Activated CD4-positive, alpha-beta T cell treated with anti-CD3 and anti-CD28 coated beads for 36 hours (primary cell): ENCODE measurements at regions of chr2 and their contacts with region 1.

Region 1: DNA sequence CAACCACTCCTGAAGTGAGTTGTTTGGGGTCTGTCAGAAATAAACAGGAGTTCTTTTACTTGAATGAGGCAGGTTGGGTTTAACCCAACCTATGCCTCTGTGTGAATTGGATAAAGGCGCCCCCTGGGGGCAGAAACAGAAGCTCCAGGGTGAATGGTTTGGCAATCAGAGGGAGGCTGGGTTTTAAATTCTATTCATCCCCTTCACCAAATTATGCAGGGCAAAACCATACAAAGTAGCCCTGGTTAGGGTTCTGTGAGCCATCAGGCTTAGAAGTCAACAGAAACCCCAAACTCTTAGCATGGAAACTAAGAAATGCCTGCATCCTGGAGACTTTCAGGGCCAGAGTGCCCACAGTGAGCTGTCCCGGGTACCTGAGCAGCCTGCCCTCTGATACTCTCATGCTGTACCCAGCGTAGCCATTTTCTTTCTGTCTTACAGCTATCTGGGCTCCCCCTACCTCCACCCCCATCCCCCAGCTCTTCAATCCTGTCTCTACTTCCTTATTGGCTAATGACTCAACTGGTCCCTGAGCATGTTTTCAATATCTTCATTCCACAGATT is 241.5 kb downstream of the ICOS start:
- DNase-seq: peak; percentile 85
- ATAC-seq: peak; percentile 95
- H3K4me3 Mint-ChIP-seq: no peak overlapping the region
- H3K27ac Mint-ChIP-seq: no peak overlapping the region
- H3K4me1 Mint-ChIP-seq: peaks cover 8% of the 10 kb centered on the region
- H3K27me3 Mint-ChIP-seq: peaks cover 7% of the 10 kb centered on the region

Region 2: GRCh38 chr2:203928849-203929248 is 249.2 kb before region 1 on chr2:
- CTCF ChIA-PET with region 1: interaction called, 5 read pairs
- POLR2A ChIA-PET with region 1: no interaction called
- intact Hi-C with region 1: loop called in 1 of 2 experiments (anchors 1 kb)
- DNase-seq: no peak
- ATAC-seq: no peak
- H3K4me3 Mint-ChIP-seq: no peak overlapping the region
- H3K27ac Mint-ChIP-seq: no peak overlapping the region
- H3K4me1 Mint-ChIP-seq: peaks cover 41% of the 10 kb centered on the region
- H3K27me3 Mint-ChIP-seq: peaks cover 1% of the 10 kb centered on the region

Region 3: DNA sequence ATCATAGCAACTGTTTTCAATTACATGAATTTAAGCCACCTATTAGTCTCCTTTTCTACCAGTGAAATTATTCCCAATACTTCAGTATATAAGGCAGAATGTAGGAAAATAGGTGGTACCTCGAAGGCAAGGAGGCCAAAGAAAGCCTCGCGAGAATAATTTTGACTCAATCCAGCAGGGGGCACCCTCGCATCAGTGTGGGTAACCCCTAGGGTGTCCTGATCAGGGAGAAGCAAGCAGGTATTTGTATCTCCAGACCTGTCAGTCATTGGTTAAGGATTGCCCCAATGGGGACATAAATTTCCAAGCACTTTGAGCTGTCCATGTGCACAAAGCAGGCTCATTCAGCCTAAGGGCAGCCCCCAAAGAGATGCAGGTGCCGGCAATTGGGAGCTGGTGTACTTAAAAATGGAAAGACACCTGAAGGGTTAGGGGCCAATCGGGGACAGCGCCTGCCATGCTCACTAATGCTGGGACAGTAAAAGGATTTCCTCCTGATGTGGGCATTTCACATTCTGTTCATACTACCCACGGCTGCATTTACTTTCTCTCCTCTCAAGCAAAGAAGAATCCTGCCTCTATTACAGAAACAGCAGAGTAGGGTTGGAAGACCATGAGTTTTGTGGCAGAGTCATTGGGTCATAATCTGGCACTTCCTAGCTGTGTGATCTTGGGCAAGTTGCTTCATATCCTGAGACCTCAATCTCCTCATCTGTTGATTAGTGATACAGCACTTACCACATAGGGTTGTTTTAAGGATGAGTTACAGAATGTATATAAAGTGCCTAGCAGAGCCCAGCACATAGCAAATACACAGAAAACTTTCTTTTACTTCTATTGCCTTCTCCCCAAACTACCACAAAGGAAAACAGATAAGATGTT is 105.4 kb before region 1 on chr2:
- CTCF ChIA-PET with region 1: interaction called, 137 read pairs
- POLR2A ChIA-PET with region 1: no interaction called
- intact Hi-C with region 1: loop called (anchors 1 kb)
- DNase-seq: peak; percentile 88
- ATAC-seq: peak; percentile 89
- H3K4me3 Mint-ChIP-seq: no peak overlapping the region
- H3K27ac Mint-ChIP-seq: no peak overlapping the region
- H3K4me1 Mint-ChIP-seq: peaks cover 7% of the 10 kb centered on the region
- H3K27me3 Mint-ChIP-seq: peaks cover 5% of the 10 kb centered on the region

Region 4: GRCh38 chr2:204145263-204145751 is 32.8 kb before region 1 on chr2:
- CTCF ChIA-PET with region 1: interaction called, 37 read pairs
- POLR2A ChIA-PET with region 1: no interaction called
- intact Hi-C with region 1: loop called (anchors 1 to 2 kb)
- DNase-seq: peak; percentile 89
- ATAC-seq: peak; percentile 97
- H3K4me3 Mint-ChIP-seq: peak overlapping the region; percentile 65
- H3K27ac Mint-ChIP-seq: peak overlapping the region; percentile 68
- H3K4me1 Mint-ChIP-seq: peaks cover 10% of the 10 kb centered on the region
- H3K27me3 Mint-ChIP-seq: peaks cover 13% of the 10 kb centered on the region

Region 5: GRCh38 chr2:204161009-204161408 is 17.1 kb before region 1 on chr2:
- CTCF ChIA-PET with region 1: interaction called, 26 read pairs
- POLR2A ChIA-PET with region 1: no interaction called
- intact Hi-C with region 1: no loop called
- DNase-seq: no peak
- ATAC-seq: no peak
- H3K4me3 Mint-ChIP-seq: no peak overlapping the region
- H3K27ac Mint-ChIP-seq: no peak overlapping the region
- H3K4me1 Mint-ChIP-seq: no peaks in the 10 kb centered on the region
- H3K27me3 Mint-ChIP-seq: peaks cover 9% of the 10 kb centered on the region

Region 6: DNA sequence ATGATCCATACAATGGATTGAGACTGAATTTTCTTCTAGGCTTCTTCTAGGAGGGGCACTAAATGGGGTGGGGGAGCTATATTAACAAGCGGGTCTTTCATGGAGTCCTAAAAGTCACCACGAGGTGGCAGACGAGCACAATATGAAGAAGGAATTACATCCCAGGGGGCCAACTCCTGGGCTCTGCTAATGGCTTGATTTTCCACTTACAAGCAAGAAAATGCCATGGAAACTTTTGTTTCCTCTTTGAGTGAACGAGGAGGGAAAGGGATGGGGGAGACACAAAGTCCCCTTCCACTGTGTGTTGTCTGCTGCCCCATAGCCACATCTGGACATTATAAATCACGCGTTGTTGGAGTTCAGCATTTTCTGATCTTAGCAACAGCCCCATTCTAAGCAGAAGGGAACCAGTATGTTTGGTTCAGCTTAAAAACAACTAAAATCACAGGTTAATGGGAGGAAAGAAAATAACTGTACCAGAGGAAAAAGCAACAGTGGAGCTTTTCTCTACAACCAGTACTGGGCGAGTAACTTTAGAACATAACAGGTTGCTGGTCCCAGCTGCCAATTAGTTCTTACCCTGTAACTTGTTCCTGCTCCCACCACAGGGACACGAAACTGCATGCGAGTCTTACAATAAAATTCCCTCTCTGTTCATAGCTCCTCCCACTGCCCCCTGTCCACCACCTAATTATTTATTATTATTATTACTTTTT is 82.3 kb after region 1 on chr2:
- CTCF ChIA-PET with region 1: interaction called, 17 read pairs
- POLR2A ChIA-PET with region 1: no interaction called
- intact Hi-C with region 1: no loop called
- DNase-seq: peak; percentile 67
- ATAC-seq: peak; percentile 51
- H3K4me3 Mint-ChIP-seq: no peak overlapping the region
- H3K27ac Mint-ChIP-seq: no peak overlapping the region
- H3K4me1 Mint-ChIP-seq: no peaks in the 10 kb centered on the region
- H3K27me3 Mint-ChIP-seq: peaks cover 19% of the 10 kb centered on the region